Tibial artery (tissue), 4 donors: ENCODE measurements at regions of chr21 and their contacts with region 1.

Region 1: GRCh38 chr21:46056450-46056903 is 41.4 kb upstream of the COL6A2 start:
- DNase-seq: peak; percentile 91 to 97
- H3K4me3 ChIP-seq: peak overlapping the region; percentile 23 to 36
- H3K27ac ChIP-seq: peak overlapping the region; percentile 90 to 97
- H3K4me1 ChIP-seq: peaks cover 7 to 60% (median 50%) of the 10 kb centered on the region in 4 donors
- H3K27me3 ChIP-seq: no peaks in the 10 kb centered on the region
- CTCF ChIP-seq: no peak

Region 2: GRCh38 chr21:45981151-45982089 is 75.1 kb before region 1 on chr21 and contains the start of gene COL6A1:
- intact Hi-C with region 1: loop called (anchors 2 kb)
- DNase-seq: peak; percentile 87 to 94
- H3K4me3 ChIP-seq: peak within 1 kb of the TSS; percentile 97
- H3K27ac ChIP-seq: peak within 1 kb of the TSS; percentile 86 to 94
- H3K4me1 ChIP-seq: peaks cover 0 to 64% (median 36%) of the 10 kb centered on the region in 4 donors
- H3K27me3 ChIP-seq: no peaks in the 10 kb centered on the region
- CTCF ChIP-seq: no peak

Region 3: DNA sequence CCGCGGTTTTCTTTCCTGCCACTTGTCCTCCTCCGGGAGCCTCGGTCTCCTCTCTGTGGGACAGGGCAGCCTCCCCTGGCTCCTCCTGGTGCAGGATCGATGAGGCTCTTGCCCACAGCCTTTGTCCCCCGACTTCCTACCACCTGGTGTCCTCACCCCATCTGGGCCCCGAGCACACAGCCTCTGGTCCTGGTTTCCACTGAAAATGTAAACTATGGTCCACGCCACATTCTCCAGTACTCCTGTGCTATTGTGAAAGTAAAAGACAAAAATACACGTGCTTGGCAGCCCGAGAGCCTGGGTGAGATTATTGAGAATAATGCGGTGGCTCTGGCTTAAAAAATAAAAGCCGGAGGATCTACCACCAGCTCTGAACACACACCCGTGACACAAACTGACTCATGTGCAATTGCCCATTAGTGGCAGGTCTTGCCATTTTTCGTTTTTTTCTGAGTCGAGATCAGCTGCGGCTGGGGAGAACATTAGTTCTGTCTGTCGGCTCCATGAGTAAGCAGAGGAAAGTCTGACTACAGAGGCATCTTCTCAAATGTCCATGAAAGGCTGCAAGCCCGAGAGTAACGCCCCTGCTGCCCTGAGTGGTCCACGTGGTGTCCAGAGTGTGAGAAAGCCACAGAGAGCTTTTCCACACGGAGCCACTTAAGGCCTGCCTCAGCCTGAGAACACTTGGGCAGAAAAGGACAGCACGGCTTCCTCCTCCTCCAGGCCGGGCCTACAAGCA is 35.7 kb after region 1 on chr21:
- intact Hi-C with region 1: loop called (anchors 5 kb)
- DNase-seq: peak; percentile 92 to 96
- H3K4me3 ChIP-seq: peak overlapping the region; percentile 25 to 34
- H3K27ac ChIP-seq: peak overlapping the region; percentile 95 to 100
- H3K4me1 ChIP-seq: peaks cover 4 to 38% (median 28%) of the 10 kb centered on the region in 4 donors
- H3K27me3 ChIP-seq: no peaks in the 10 kb centered on the region
- CTCF ChIP-seq: no peak

Region 4: DNA sequence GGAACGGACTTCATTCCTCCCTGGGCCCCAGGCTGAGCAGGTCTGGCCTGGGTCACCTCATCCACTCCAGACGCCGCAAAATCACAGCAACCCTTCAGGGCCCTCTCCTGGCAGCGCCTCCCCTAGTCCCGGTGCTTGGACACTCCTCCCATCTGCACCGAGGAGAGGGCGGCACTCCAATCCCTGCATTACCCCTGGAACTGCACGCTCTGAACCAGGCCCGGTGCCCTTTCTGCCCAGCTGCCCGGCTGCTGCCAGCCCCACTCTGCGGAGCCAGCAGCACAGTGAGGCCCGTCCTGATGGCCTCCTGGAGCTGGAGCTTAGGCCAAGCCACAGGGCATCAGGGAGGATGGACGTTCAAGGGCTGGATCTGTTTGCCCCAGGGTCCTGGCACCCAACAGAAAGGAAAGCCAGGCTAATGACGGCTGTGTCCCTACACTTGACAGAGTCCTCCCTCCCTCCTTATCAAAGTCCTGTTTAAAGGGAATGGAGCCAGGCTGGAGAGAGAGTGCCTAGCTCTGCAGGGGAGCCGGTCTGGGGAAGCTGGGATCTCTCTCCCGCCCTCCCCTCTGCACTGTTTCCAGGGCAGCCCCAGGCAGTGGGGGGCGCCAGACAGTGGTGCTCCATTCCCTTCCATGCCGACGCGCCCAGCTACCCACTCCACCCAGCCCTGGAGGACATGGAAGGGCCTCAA is 54.2 kb after region 1 on chr21:
- intact Hi-C with region 1: no loop called
- DNase-seq: peak; percentile 58 to 83
- H3K4me3 ChIP-seq: no peak overlapping the region
- H3K27ac ChIP-seq: peak overlapping the region; percentile 57 to 64
- H3K4me1 ChIP-seq: peaks cover 0 to 49% (median 25%) of the 10 kb centered on the region in 4 donors
- H3K27me3 ChIP-seq: no peaks in the 10 kb centered on the region
- CTCF ChIP-seq: peak; percentile 24